ENCODE measurements at regions of chr3 and their contacts with region 1.

Region 1: DNA sequence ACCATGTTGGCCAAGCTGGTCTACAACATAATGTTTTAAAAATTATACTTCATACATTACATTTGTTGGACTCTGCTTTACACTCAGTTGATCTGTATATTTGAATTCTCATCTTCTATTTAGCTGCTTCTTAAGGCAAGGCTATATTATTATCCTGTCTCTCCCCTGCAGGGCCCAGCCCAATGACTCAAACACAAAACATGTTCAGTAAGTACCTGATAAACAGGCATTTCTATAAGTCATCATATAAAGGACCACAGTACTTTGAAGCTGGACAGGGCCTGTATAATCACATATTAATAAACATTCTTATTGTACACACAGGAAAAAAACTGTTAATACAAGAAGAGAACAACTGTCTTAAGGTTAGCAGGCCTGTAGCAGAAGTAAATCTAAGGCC is 36.2 kb downstream of the NGLY1 start:
- DNase-seq: no peak
- ATAC-seq: no peak
- H3K4me3 Mint-ChIP-seq: no peak overlapping the region
- H3K27ac Mint-ChIP-seq: no peak overlapping the region
- H3K4me1 Mint-ChIP-seq: no peaks in the 10 kb centered on the region
- H3K27me3 Mint-ChIP-seq: no peaks in the 10 kb centered on the region
- CTCF ChIP-seq: no peak

Region 2: GRCh38 chr3:25856902-25857518 is 110.0 kb after region 1 on chr3:
- CTCF ChIA-PET with region 1: interaction called, 3 read pairs
- POLR2A ChIA-PET with region 1: no interaction called
- intact Hi-C with region 1: loop called (anchors 5 kb)
- DNase-seq: no peak
- ATAC-seq: peak; percentile 71
- H3K4me3 Mint-ChIP-seq: no peak overlapping the region
- H3K27ac Mint-ChIP-seq: no peak overlapping the region
- H3K4me1 Mint-ChIP-seq: no peaks in the 10 kb centered on the region
- H3K27me3 Mint-ChIP-seq: no peaks in the 10 kb centered on the region
- CTCF ChIP-seq: peak; percentile 92

Measured in activated B cell treated with CpG ODN at 0.5 μM for 24 hours (primary cell).